Heart left ventricle (tissue), 16 donors: ENCODE measurements at regions of chr3 and their contacts with region 1.

Region 1: GRCh38 chr3:170908235-170909116 is at the start of gene EIF5A2:
- DNase-seq: peak; percentile 94 to 98 (median 96)
- ATAC-seq: peak; percentile 98 to 99 (median 99)
- H3K4me3 ChIP-seq: peak within 1 kb of the TSS; percentile 38 to 92 (median 78)
- H3K27ac ChIP-seq: peak within 1 kb of the TSS in 11 of 12 donors; percentile 23 to 78 (median 61)
- H3K4me1 ChIP-seq: peaks cover 0 to 24% (median 13%) of the 10 kb centered on the region in 12 donors
- H3K27me3 ChIP-seq: no peaks in the 10 kb centered on the region
- CTCF ChIP-seq: peak in 1 of 12 donors; percentile 10
- POLR2A ChIP-seq: peak in 1 of 2 donors; percentile 64
- total RNA-seq, gene EIF5A2: 3.9 to 13.9 (median 10.0) TPM

Region 2: DNA sequence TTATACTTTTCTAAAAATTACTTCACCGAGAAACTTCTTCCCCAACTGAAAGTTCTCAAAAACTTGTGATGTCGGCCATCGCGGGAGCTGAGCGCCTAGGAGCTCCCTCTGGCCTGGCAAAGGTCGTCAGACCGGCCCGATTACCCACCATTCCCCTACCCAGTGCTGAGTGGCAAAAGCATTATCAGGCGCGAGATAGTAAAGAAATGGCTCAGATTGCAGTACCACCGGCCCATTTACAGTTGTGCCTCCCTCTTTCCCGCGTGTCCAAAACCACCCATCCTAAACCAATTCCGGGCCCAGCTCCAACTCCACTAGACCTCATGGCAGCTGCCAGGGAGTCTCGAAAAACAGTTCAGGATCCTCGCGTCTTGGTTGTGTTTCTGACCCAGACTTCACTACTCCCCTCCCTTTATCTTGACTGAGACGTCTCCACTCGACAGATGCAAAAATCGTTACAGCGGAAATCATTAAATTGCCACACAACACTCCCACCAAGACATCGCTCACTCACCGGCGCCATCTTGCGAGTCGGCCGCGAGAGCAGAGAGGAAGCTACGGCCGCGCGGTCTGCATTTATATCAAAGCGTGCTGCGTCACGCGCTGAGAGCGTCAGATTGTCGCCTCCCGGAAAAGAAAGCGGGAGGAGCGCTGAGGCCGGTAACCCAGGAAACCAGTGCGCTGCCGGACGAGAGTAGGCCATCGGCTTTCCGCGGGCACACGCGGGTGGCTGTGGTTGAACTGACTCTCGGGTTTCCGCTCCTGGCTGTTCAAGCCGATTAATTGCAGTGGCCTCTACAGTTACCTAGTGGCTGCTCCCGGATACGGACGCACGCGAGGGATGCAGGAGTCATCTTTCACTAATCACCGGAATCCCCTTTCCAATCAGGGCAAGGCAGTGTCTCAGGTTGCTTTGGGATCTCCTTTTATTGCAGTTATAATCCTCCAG is 38.6 kb before region 1 on chr3 and contains the start of gene RPL22L1:
- intact Hi-C with region 1: loop called in 2 of 10 experiments (anchors 5 kb)
- DNase-seq: peak; percentile 94 to 96 (median 96)
- ATAC-seq: peak; percentile 97 to 99 (median 98)
- H3K4me3 ChIP-seq: peak within 1 kb of the TSS; percentile 8 to 82 (median 66)
- H3K27ac ChIP-seq: peak within 1 kb of the TSS; percentile 54 to 92 (median 80)
- H3K4me1 ChIP-seq: peaks cover 0 to 33% (median 19%) of the 10 kb centered on the region in 12 donors
- H3K27me3 ChIP-seq: no peaks in the 10 kb centered on the region
- CTCF ChIP-seq: peak in 6 of 12 donors; percentile 15 to 42 (median 26)
- POLR2A ChIP-seq: peak in 1 of 2 donors; percentile 72
- total RNA-seq, gene RPL22L1: 8.6 to 34.2 (median 16.9) TPM